Left colon (tissue), 2 donors: ENCODE measurements at regions of chr15 and their contacts with region 1.

Region 1: GRCh38 chr15:49235446-49236124 is 65.5 kb downstream of the GALK2 start:
- DNase-seq: peak in 1 of 2 donors; percentile 25
- ATAC-seq: peak; percentile 80

Region 2: DNA sequence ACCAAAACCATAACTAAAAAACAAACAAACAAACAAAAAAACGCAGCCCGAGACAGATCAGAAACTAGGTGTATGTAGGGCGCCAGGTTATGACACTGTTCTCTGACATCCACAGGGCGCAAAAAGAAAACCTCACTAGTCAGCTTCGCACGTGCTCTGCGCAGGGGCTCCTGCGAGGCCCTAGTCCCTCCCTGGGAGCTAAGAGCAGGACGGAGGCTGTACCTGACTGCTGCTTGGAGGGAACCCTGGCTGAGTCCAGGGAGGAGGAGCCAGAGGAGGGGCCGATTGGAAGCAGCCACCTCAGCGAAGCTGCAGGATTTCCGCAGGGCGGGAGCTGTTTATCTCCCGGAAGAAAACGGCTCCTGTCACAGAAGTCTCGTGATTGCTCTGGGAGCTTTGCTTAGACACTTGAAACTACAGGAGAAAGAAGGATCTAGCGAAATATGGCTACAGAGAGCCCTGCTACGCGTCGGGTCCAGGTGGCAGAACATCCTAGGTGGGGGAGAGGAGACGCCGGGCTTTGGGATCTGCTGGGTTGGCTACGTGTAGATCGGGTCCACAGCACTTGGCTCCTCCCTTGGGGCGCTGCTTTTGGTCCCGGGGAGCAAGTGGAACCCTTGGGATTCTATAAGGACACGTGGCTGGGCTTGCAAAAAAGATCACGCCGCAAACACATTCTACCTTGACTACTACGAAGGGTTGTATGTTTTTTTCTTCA is 65.5 kb before region 1 on chr15 and contains the start of gene GALK2:
- intact Hi-C with region 1: no loop called
- DNase-seq: peak; percentile 91 to 95
- ATAC-seq: peak; percentile 99
- total RNA-seq, gene GALK2: 34.9 to 38.5 TPM

Region 3: DNA sequence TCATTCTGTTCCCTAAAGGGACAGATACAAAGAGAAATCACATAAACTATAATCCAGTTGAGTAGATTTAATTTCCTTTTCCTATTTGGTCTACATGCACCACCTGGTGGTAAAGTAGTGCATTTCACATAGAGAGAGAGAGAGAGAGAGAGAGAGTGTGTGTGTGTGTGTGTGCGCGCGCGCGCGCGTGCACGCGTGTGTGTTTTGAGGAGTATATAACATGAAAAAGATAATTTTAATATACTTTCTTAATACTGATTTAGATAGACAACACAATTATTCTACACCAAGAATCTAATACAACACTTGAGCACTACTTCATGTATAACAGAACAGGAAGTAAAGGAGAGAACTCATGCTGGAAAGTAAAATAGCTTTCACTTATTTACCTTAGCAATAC is 186.4 kb after region 1 on chr15:
- intact Hi-C with region 1: loop called in 1 of 2 experiments (anchors 5 kb)
- DNase-seq: peak in 1 of 2 donors; percentile 54
- ATAC-seq: peak; percentile 72

Region 4: GRCh38 chr15:50003786-50004334 is 768.3 kb after region 1 on chr15:
- intact Hi-C with region 1: loop called in 1 of 2 experiments (anchors 10 kb)
- DNase-seq: peak; percentile 83 to 92
- ATAC-seq: peak; percentile 100

Region 5: GRCh38 chr15:50051803-50052419 is 816.3 kb after region 1 on chr15:
- intact Hi-C with region 1: loop called in 1 of 2 experiments (anchors 5 kb)
- DNase-seq: peak in 1 of 2 donors; percentile 36
- ATAC-seq: peak; percentile 69

Region 6: GRCh38 chr15:50145451-50145872 is 909.9 kb after region 1 on chr15:
- intact Hi-C with region 1: loop called in 1 of 2 experiments (anchors 5 kb)
- DNase-seq: no peak
- ATAC-seq: peak; percentile 55